ENCODE measurements at regions of chr4 and their contacts with region 1.

Region 1: DNA sequence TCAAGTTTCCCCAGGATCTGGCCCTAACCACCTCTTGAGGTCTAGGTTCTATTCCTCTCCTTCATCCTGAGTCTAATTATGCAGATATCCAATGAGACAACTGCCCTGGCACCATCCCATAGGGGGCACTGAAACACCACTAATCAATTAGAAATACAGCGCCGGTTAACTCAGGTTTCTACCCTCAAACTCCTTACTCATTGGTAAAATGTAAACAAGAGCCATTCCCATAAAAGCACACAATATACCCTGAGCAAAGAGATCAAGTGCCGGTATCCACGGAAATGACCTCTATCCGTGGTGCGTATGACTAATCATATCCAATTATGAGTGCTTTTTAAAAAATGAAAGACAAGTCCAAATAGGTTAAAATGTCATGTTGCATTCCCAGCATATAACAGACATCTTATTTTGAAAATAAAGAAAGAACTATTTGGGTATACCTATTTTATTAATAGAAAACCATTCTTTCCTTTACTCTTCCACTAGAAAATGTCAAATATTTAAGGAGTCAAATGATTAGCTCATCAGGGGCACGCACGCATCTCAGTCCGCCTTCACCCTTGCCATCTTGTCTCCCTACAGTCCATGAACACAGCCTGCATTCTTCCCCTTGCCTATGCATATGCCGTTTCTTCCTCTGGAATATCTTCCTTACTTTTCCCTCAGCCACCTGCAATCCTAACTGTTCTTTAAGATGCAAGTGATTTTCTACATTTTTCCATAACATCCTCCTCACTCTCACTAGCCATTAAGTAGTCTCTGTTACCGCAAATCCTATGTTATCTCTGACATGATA is 141.1 kb downstream of the MAML3 start:
- DNase-seq: peak; percentile 42
- H3K4me3 Mint-ChIP-seq: no peak overlapping the region
- H3K27ac Mint-ChIP-seq: no peak overlapping the region
- H3K4me1 Mint-ChIP-seq: peaks cover 10% of the 10 kb centered on the region
- H3K27me3 Mint-ChIP-seq: peaks cover 40% of the 10 kb centered on the region

Region 2: GRCh38 chr4:140326395-140326993 is 313.6 kb after region 1 on chr4:
- intact Hi-C with region 1: loop called (anchors 2 kb)
- DNase-seq: no peak
- H3K4me3 Mint-ChIP-seq: no peak overlapping the region
- H3K27ac Mint-ChIP-seq: no peak overlapping the region
- H3K4me1 Mint-ChIP-seq: peaks cover 12% of the 10 kb centered on the region
- H3K27me3 Mint-ChIP-seq: peaks cover 17% of the 10 kb centered on the region

Region 3: DNA sequence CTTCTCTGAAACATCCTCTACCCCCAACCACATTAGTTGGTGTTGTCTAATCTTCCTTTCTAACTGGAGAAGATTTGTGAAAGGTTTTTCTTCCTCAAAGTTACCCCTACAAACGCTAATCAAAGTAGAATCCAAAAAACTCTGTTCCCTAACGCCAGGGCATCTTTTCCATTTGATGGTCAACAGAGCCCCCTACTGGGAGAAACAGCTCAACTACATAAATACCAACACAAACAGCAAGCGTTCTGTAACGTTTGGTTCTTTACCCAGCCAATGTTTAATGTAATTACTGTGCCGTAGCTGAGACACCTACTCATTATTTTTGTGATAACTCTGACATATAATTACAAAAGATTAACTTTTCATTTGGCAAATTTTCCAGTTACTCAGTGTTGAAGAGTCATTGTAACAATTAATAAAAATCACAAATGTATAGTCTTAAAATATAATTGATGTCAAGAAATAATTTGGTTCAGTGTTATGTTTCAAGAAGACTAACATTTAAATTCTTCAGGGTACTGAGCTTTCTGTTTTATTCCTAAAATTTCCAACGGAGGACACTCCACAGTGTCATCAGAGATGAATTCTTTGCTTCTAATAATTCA is 838.2 kb after region 1 on chr4:
- intact Hi-C with region 1: loop called (anchors 2 kb)
- DNase-seq: peak; percentile 3
- H3K4me3 Mint-ChIP-seq: no peak overlapping the region
- H3K27ac Mint-ChIP-seq: no peak overlapping the region
- H3K4me1 Mint-ChIP-seq: no peaks in the 10 kb centered on the region
- H3K27me3 Mint-ChIP-seq: peaks cover 2% of the 10 kb centered on the region

Region 4: DNA sequence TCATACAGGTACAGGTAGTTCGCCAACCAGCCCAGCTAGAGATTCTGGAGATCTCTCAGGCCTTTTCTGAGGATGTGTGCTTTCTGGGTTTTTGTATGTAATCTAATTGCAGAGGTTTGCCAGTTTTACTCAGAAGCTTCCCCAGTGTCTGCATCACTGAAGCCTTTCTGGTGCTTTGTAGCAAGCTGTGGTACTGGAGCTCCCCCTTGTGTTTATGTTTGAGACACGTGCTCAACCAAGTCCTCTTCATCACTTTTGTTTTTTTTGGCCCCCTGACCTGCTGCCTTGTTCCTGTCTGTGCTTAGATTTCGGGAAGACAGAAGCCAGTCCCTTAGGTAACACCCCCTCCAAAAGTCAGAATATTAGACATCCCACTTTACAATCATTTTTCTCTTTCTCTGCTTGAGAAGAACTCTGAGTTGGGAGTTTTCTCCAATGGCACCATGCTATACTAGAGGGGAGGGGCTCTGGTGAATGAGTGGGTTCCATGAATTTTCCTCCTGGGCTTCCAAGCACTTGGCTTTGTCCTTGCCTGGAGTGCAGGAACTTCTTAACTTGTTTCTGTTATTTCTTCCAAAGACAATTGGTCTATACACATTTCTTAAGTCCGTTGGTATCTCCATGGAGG is 871.7 kb after region 1 on chr4:
- intact Hi-C with region 1: no loop called
- DNase-seq: peak; percentile 5
- H3K4me3 Mint-ChIP-seq: no peak overlapping the region
- H3K27ac Mint-ChIP-seq: no peak overlapping the region
- H3K4me1 Mint-ChIP-seq: no peaks in the 10 kb centered on the region
- H3K27me3 Mint-ChIP-seq: peaks cover 2% of the 10 kb centered on the region

Measured in activated T-helper 1 cell treated with anti-CD3 and anti-CD28 coated beads, Interleukin-12 subunit alpha, Interleukin-12 subunit beta, Interleukin-2, Interleukin-4 antibody, amounts not matched to agents 30 ng/mL and 10 ng/mL and 1 ng/mL, durations not matched to agents 14 hours and 24 hours and 36 hours (primary cell).